OCI-LY7 (cell line): ENCODE measurements at regions of chr2 and their contacts with region 1.

Region 1: DNA sequence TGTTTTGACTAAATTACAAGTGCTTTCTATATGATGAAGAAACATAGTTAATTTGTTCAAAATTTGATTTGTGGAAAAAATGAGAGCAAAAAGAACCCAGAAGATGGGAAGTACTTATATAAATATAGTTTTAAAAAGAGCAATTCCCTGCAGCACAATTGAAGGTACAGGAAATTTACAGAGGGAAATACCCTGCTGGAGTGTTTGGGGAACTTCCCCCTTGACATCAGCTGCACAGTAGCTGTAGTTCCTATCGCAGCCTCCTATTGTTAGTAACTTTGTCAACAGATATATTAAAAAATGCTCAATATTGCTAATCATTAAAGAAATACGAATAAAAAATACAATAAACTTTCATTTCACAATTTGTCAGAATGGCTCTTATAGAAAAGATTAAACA is 1118.8 kb upstream of the ZEB2 start:
- DNase-seq: no peak
- H3K4me3 ChIP-seq: no peak overlapping the region
- H3K27ac ChIP-seq: no peak overlapping the region
- H3K4me1 ChIP-seq: no peaks in the 10 kb centered on the region
- CTCF ChIP-seq: no peak

Region 2: DNA sequence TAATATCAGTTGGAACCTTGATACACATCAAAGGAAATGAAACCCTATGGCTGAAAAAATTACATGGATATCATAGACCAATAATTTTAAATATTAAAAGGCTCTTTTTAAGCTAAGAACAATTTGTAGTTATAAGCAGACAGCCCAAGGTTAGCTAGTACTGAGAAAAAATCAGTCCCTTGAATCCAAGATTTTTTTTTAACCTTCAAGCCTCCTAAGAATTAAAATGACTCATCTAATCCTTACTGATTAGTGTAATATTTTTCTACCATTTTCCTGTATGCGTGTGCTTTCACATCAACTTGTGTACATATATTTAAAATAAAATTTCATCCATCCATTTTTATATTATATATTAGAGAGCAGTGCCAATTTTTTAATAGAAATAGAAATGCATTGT is 113.8 kb before region 1 on chr2:
- CTCF ChIA-PET with region 1: no interaction called
- POLR2A ChIA-PET with region 1: no interaction called
- intact Hi-C with region 1: no loop called
- DNase-seq: no peak
- H3K4me3 ChIP-seq: no peak overlapping the region
- H3K27ac ChIP-seq: no peak overlapping the region
- H3K4me1 ChIP-seq: no peaks in the 10 kb centered on the region
- CTCF ChIP-seq: no peak

Region 3: DNA sequence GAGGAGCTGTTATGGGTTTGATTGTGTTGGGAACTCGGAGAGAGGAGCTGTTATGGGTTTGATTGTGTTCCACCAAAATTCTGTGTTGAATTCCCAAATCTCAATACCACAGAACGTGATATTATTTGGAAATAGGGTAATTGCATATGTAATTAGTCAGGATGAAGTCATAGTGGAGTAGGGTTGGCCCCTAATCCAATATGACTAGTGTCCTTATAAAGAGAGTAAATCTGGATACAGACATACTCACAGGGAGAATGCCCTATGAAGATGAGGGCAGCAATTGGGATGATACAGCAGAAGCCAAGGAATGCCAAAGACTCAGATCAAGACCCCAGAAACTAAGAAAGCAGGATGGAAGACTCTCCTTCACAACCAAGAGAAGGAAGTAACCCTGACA is 95.5 kb before region 1 on chr2:
- CTCF ChIA-PET with region 1: no interaction called
- POLR2A ChIA-PET with region 1: no interaction called
- intact Hi-C with region 1: no loop called
- DNase-seq: no peak
- H3K4me3 ChIP-seq: no peak overlapping the region
- H3K27ac ChIP-seq: no peak overlapping the region
- H3K4me1 ChIP-seq: no peaks in the 10 kb centered on the region
- CTCF ChIP-seq: no peak

Region 4: GRCh38 chr2:145626301-145626700 is 12.4 kb before region 1 on chr2:
- CTCF ChIA-PET with region 1: interaction called, 3 read pairs
- POLR2A ChIA-PET with region 1: interaction called, 10 read pairs
- intact Hi-C with region 1: no loop called
- DNase-seq: no peak
- H3K4me3 ChIP-seq: no peak overlapping the region
- H3K27ac ChIP-seq: no peak overlapping the region
- H3K4me1 ChIP-seq: no peaks in the 10 kb centered on the region
- CTCF ChIP-seq: no peak

Region 5: GRCh38 chr2:145682546-145683157 is 44.0 kb after region 1 on chr2:
- CTCF ChIA-PET with region 1: no interaction called
- POLR2A ChIA-PET with region 1: no interaction called
- intact Hi-C with region 1: no loop called
- DNase-seq: no peak
- H3K4me3 ChIP-seq: no peak overlapping the region
- H3K27ac ChIP-seq: no peak overlapping the region
- H3K4me1 ChIP-seq: no peaks in the 10 kb centered on the region
- CTCF ChIP-seq: no peak